Activated CD8-positive, alpha-beta T cell treated with anti-CD3 and anti-CD28 coated beads for 36 hours (primary cell): ENCODE measurements at regions of chr19 and their contacts with region 1.

Region 1: DNA sequence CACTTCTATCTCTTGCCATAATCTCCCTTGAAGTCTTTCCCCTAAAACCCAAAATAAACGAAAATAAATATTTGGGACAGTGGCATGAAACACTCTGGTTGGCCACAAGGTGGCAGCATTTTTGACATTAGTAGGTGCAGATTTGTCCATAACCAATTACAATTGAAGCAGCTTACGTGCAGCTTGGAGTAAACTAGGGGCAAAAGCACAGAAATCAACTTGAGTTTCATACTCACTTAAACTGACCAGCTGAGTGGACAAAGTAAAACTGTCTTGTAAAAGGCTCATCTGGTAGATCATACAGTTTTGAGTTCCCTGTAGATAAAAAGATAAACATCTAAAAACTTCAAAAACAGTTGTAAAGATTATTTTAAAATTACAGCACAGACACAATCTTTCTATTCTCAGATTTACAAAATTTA is 18.8 kb downstream of the PDCD5 start:
- DNase-seq: peak; percentile 52
- ATAC-seq: peak; percentile 65
- H3K4me3 Mint-ChIP-seq: no peak overlapping the region
- H3K27ac Mint-ChIP-seq: peak overlapping the region; percentile 75
- H3K4me1 Mint-ChIP-seq: peaks cover 13% of the 10 kb centered on the region
- H3K27me3 Mint-ChIP-seq: no peaks in the 10 kb centered on the region
- CTCF ChIP-seq: peak; percentile 78

Region 2: GRCh38 chr19:32614916-32615315 is 15.2 kb after region 1 on chr19:
- CTCF ChIA-PET with region 1: interaction called, 10 read pairs
- POLR2A ChIA-PET with region 1: no interaction called
- intact Hi-C with region 1: no loop called
- DNase-seq: no peak
- ATAC-seq: no peak
- H3K4me3 Mint-ChIP-seq: no peak overlapping the region
- H3K27ac Mint-ChIP-seq: no peak overlapping the region
- H3K4me1 Mint-ChIP-seq: no peaks in the 10 kb centered on the region
- H3K27me3 Mint-ChIP-seq: no peaks in the 10 kb centered on the region
- CTCF ChIP-seq: no peak